ENCODE measurements at regions of chr2 and their contacts with region 1.

Region 1: GRCh38 chr2:204180649-204181048 is 244.1 kb downstream of the ICOS start:
- DNase-seq: no peak
- H3K4me3 ChIP-seq: no peak overlapping the region
- H3K27ac ChIP-seq: no peak overlapping the region
- H3K4me1 ChIP-seq: no peaks in the 10 kb centered on the region
- H3K27me3 ChIP-seq: no peaks in the 10 kb centered on the region
- CTCF ChIP-seq: no peak

Region 2: DNA sequence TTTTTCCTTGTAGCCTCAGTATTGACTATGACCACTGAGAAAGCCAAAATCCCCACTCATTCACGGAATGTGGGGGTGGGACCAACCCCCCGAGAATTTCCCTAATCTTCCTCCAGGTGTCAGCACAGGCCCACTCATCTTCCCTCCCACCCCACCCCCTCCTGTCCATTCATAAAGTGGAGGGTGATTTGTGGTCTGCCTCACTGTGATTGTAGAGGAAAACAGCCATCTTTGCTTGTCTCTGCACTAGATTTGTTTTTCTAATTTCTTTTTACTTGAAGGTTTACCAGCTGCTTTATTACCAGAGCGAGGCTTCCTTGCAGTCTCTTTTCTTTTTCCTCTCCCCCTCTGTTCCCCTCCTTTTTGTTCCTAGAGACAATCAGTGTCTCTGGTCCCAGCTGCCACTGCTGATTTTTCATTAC is 72.3 kb before region 1 on chr2:
- intact Hi-C with region 1: loop called (anchors 5 kb)
- DNase-seq: no peak
- H3K4me3 ChIP-seq: no peak overlapping the region
- H3K27ac ChIP-seq: peak overlapping the region; percentile 69
- H3K4me1 ChIP-seq: peaks cover 43% of the 10 kb centered on the region
- H3K27me3 ChIP-seq: no peaks in the 10 kb centered on the region
- CTCF ChIP-seq: peak; percentile 76

Region 3: DNA sequence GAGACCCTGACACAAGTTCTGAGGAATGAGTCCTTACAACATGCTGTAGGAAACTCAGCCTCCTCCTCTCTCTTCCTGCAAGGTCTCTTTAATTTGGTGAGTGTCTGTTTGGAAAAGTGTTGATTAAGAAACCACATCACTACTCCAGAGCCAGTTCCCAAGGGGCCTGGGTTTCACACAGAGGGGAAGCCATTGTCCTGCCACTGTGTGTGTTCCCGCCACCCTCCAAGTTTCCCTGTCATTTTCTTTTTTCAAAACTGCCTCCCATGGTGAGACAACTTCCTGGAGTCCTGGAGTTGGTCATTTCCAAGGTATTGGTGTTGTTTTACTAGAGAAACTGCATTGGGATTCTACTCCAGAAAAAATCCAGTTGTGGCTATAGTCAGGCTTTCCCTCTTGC is 132.6 kb after region 1 on chr2:
- intact Hi-C with region 1: no loop called
- DNase-seq: no peak
- H3K4me3 ChIP-seq: no peak overlapping the region
- H3K27ac ChIP-seq: no peak overlapping the region
- H3K4me1 ChIP-seq: peaks cover 7% of the 10 kb centered on the region
- H3K27me3 ChIP-seq: peaks cover 8% of the 10 kb centered on the region
- CTCF ChIP-seq: no peak